ENCODE measurements at regions of chr9 and their contacts with region 1.

Region 1: DNA sequence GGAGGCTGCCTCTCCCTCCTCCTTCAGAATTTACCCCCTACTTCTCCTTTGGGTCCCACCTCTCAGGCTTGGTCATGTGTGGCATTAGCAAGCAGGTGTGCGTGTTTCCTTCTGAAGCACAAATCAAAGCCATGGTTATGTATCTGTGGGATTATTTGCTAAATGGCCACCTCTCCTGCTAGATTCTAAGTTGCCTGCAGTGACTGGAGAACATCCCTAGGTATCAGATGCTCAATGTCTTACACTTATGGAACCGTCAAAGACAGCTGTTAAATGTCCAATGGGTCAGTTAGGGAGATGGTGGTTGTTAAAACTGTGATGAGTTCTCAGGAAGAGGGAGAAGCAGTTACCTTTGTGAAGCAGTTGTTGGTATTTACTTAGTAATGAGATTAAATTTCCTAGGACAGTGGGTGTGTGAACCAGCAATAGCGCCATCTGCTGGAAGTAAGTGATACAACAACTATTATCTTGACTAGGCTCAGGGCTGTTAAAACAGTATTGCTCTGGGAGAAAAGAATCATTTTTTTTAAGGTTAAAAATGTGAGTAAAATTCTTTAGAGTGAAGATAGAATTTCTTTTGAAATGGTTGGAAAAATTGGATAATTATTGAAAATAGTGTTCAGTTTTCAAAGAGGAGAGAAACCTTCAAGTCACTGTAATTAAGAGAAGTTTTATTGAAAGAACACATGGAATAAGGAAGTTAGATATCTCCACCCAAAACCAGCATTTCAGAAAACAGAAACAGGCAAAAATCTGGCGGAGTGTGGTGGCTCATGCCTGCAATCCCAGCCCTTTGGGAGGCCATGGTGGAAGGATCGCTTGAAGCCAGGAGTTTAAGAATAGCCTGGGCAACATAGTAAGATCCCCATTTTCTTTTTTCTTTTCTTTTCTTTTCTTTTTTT is 71.3 kb downstream of the TMC1 start:
- DNase-seq: no peak
- H3K4me3 ChIP-seq: no peak overlapping the region
- H3K27ac ChIP-seq: no peak overlapping the region
- H3K4me1 ChIP-seq: peaks cover 0 to 10% (median 0%) of the 10 kb centered on the region in 4 donors
- H3K27me3 ChIP-seq: no peaks in the 10 kb centered on the region
- CTCF ChIP-seq: peak; percentile 72 to 93

Region 2: GRCh38 chr9:71306134-71306533 is 1286.6 kb before region 1 on chr9:
- intact Hi-C with region 1: no loop called
- DNase-seq: no peak
- H3K4me3 ChIP-seq: no peak overlapping the region
- H3K27ac ChIP-seq: no peak overlapping the region
- H3K4me1 ChIP-seq: no peaks in the 10 kb centered on the region
- H3K27me3 ChIP-seq: no peaks in the 10 kb centered on the region
- CTCF ChIP-seq: no peak

Region 3: GRCh38 chr9:71984403-71984802 is 608.4 kb before region 1 on chr9:
- intact Hi-C with region 1: no loop called
- DNase-seq: no peak
- H3K4me3 ChIP-seq: no peak overlapping the region
- H3K27ac ChIP-seq: no peak overlapping the region
- H3K4me1 ChIP-seq: peaks cover 0 to 7% (median 0%) of the 10 kb centered on the region in 4 donors
- H3K27me3 ChIP-seq: no peaks in the 10 kb centered on the region
- CTCF ChIP-seq: no peak

Region 4: GRCh38 chr9:72292256-72292682 is 300.5 kb before region 1 on chr9:
- intact Hi-C with region 1: loop called (anchors 5 kb)
- DNase-seq: no peak
- H3K4me3 ChIP-seq: no peak overlapping the region
- H3K27ac ChIP-seq: no peak overlapping the region
- H3K4me1 ChIP-seq: peaks cover 0 to 15% (median 1%) of the 10 kb centered on the region in 4 donors
- H3K27me3 ChIP-seq: no peaks in the 10 kb centered on the region
- CTCF ChIP-seq: peak; percentile 60 to 67

Region 5: DNA sequence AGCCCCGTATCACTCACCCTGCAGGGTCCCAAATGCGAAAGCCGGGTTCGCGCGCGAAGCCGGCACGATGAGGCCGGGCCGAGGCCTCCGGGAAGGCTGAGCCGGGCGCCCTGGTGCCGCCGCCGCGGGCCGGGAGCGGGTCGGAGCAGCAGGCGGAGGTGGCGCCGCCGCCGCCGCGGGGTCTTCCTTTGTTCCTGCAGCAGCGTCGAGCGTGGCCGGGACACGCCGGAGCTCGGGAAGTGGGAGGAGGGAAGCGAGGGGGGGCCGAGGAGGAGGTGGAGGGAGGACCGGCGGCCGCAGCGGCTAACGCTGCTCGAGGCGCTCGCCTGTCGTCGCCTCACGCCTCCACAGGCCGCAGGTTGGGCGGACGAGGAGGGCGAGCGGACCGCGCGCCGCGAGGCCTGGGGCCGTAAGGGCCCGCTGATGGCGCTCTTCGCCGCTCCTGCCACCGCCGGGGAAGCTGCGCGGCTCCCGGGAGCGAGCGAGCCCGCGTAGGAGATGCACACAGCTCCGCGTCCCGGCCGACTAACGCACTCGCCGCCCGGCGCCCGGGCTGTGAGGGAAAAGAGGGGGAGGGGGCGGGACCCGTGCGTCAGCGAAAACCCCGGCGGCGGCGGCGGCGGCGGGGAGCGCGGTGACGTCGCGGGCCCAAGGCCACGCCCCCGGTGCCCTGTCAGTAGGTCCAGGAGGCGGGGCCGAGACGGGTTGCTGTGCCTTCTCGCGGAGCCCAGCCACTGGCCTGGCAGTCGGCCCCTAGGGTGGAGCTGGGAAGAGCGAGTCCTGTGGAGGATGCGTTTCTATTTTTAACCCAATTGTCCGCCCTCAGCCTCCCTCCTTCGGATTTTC is 227.9 kb before region 1 on chr9 and contains the start of gene ZFAND5:
- intact Hi-C with region 1: loop called (anchors 10 kb)
- DNase-seq: peak; percentile 99 to 100
- H3K4me3 ChIP-seq: peak within 1 kb of the TSS; percentile 89 to 97
- H3K27ac ChIP-seq: peak within 1 kb of the TSS; percentile 99 to 100
- H3K4me1 ChIP-seq: peaks cover 0 to 28% (median 16%) of the 10 kb centered on the region in 4 donors
- H3K27me3 ChIP-seq: no peaks in the 10 kb centered on the region
- CTCF ChIP-seq: no peak

Region 6: GRCh38 chr9:72814083-72814597 is 221.4 kb after region 1 on chr9:
- intact Hi-C with region 1: no loop called
- DNase-seq: no peak
- H3K4me3 ChIP-seq: no peak overlapping the region
- H3K27ac ChIP-seq: no peak overlapping the region
- H3K4me1 ChIP-seq: no peaks in the 10 kb centered on the region
- H3K27me3 ChIP-seq: peaks cover 0 to 4% of the 10 kb centered on the region in 2 donors
- CTCF ChIP-seq: no peak

Region 7: DNA sequence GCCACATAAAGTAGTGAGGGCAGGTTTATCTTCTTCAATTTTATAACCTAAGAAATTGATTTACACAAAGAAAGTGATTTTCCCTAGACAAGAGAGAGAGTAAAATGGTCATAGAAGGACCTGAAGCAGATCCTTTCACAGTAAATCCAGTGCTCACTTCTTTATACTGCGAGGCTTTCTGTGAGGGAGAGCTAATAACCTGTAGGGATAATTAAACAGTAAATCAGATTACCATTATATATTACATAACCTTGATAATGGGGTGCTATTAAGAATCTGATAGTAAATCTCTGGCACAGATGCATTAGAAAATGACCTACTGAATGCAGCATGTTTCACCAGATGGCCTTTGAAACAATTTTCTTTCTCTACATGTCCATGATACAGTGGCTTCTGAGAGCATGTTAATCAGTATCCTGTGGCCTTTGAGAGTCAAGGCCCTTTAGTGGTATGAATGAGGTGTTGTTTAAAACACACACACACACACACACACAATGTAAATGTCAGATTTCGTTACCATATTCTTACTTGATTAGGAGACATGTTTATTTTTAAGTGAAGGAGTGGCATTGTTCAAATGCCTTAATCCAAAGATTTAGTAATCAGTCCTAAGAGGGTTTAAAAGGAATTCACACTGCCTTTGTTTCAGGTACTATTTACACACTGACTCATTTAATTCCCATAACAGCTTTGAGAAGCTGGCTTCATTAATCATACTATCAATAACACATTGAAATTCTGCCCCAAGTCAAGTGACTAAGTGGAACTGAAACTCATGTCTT is 235.4 kb after region 1 on chr9:
- intact Hi-C with region 1: loop called (anchors 10 kb)
- DNase-seq: no peak
- H3K4me3 ChIP-seq: no peak overlapping the region
- H3K27ac ChIP-seq: peak overlapping the region in 1 of 2 donors; percentile 65
- H3K4me1 ChIP-seq: peaks cover 0 to 17% (median 4%) of the 10 kb centered on the region in 4 donors
- H3K27me3 ChIP-seq: no peaks in the 10 kb centered on the region
- CTCF ChIP-seq: no peak

Region 8: GRCh38 chr9:74025402-74025894 is 1432.7 kb after region 1 on chr9:
- intact Hi-C with region 1: no loop called
- DNase-seq: no peak
- H3K4me3 ChIP-seq: no peak overlapping the region
- H3K27ac ChIP-seq: no peak overlapping the region
- H3K4me1 ChIP-seq: no peaks in the 10 kb centered on the region
- H3K27me3 ChIP-seq: no peaks in the 10 kb centered on the region
- CTCF ChIP-seq: no peak